Transverse colon (tissue), 4 donors: ENCODE measurements at regions of chr5 and their contacts with region 1.

Region 1: DNA sequence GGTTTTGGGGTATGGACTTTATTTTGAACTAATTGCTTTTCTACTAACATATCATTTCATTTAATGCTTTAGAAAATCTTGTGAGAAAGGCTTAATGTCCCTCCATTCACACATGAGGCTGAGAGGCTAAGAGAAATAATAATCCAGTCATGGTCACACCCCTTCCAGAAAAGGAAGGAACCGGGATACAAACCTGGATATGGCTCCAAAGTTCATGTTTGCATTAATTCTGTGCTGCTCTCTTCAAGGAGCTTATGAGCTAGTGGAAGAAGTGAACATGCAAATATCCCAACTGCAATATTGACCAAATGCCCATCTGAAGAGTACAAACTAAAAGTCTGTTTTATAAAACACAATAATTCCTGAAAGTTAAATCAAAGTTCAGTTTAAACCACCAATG is 732.1 kb upstream of the RIOK2 start:
- DNase-seq: no peak
- H3K4me3 ChIP-seq: no peak overlapping the region
- H3K27ac ChIP-seq: peak overlapping the region; percentile 47 to 63 (median 58)
- H3K4me1 ChIP-seq: peaks cover 0 to 18% (median 13%) of the 10 kb centered on the region in 4 donors
- H3K27me3 ChIP-seq: no peaks in the 10 kb centered on the region
- CTCF ChIP-seq: no peak
- EP300 ChIP-seq: no peak
- POLR2A ChIP-seq: no peak

Region 2: DNA sequence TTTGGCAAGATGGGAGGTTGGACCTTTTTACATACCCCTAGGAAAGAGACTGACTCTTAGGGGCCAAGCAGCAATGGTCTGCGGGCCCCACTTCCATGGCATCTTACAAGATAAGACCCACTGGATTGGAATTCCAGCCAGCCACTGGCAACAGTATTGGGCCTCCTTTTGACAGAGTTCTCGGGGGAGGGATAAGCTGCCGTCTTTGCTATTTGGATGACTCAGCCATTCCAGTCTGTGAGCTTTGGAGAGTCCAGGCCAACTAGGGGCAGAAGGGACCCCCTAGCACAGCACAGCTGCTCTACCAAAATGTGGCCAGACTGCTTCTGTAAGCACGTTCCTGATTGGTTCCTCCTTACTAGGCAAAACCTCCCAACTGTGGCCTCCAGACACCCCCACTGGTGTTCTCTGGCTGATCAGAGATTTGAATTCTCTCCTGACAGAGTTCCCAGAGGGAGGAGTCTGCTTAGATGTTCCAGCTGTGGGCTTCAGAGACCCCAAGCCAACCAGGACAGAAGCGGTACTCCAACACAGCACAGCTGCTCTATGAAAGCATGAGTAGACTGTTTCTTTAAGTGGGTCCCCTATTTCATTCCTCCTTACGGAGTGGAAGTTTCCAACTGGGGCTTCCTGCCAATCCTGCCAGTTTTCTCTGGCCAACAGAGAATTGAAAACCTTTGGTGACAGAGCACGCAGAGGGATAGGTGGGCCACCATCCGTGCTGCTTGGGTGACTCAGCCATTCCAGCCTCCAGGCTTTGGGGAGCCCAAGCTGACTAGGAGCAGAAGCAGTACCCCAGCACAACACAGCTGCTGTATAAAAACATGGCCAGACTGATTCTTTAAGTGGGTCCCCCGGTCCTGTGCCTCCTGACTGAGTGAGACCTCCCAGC is 60.0 kb before region 1 on chr5:
- in situ Hi-C with region 1: no loop called
- intact Hi-C with region 1: loop called (anchors 2 kb)
- DNase-seq: no peak
- H3K4me3 ChIP-seq: no peak overlapping the region
- H3K27ac ChIP-seq: no peak overlapping the region
- H3K4me1 ChIP-seq: no peaks in the 10 kb centered on the region
- H3K27me3 ChIP-seq: no peaks in the 10 kb centered on the region
- CTCF ChIP-seq: no peak
- EP300 ChIP-seq: no peak
- POLR2A ChIP-seq: no peak